ENCODE measurements at regions of chr19 and their contacts with region 1.

Region 1: GRCh38 chr19:28737021-28737895 is 475.7 kb downstream of the UQCRFS1 start:
- DNase-seq: no peak
- ATAC-seq: peak; percentile 57 to 75
- H3K4me3 ChIP-seq: no peak overlapping the region
- H3K27ac ChIP-seq: peak overlapping the region; percentile 23
- H3K4me1 ChIP-seq: peaks cover 1% of the 10 kb centered on the region
- H3K27me3 ChIP-seq: no peaks in the 10 kb centered on the region

Region 2: GRCh38 chr19:28878862-28879566 is 141.8 kb after region 1 on chr19:
- intact Hi-C with region 1: loop called (anchors 2 to 10 kb)
- DNase-seq: peak; percentile 66 to 84 (median 79)
- ATAC-seq: peak in 1 of 2 donors; percentile 58
- H3K4me3 ChIP-seq: no peak overlapping the region
- H3K27ac ChIP-seq: no peak overlapping the region
- H3K4me1 ChIP-seq: no peaks in the 10 kb centered on the region
- H3K27me3 ChIP-seq: no peaks in the 10 kb centered on the region

Region 3: GRCh38 chr19:29263305-29264135 is 526.3 kb after region 1 on chr19:
- intact Hi-C with region 1: loop called in 1 of 4 experiments (anchors 10 kb)
- DNase-seq: peak in 2 of 3 donors; percentile 68 to 73
- ATAC-seq: peak; percentile 17 to 50
- H3K4me3 ChIP-seq: no peak overlapping the region
- H3K27ac ChIP-seq: no peak overlapping the region
- H3K4me1 ChIP-seq: no peaks in the 10 kb centered on the region
- H3K27me3 ChIP-seq: no peaks in the 10 kb centered on the region

Measured in right cardiac atrium (tissue), 5 donors.